Activated naive CD4-positive, alpha-beta T cell treated with anti-CD3 and anti-CD28 coated beads for 36 hours (primary cell): ENCODE measurements at regions of chrX and their contacts with region 1.

Region 1: DNA sequence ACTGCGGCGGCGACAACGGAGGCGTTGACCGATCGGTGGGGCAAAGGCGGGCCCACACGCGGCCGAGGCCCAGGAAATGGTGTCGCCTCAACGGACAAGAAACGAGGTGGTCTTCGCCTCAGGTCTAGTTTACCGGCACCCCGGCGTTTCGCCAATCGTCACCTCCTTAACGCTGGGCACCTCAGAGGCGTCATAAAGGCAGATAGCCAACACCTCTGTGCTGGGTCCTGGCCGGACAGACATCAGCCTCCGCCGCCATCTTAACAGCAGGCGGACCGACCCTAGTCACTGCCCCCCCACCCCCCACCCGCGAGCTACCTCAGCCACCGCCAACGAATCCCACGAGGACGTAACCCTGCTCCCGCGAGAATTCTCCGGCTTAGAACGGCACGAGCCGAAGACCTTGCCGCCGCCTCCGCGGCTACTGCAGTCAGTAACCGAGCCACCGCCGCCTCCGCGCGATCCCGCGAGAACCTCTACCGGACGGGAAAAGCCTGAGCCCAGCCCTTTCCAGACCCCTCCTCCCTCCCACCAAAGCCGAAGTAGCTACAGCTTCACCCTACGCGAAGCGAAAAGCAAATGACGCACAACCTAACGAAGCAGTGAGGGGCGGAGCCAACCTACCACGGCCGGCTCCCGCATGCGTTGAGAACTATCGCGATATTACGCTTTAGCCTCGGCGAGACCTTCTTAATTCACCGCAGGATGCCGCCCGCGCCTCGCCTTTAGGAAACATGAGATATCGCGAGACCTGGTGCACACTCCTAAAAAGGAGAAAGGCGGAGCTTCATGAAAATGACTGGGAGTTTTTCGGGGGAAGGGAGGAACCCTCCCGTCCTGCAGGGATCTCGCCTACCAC is 2.7 kb downstream of the HUWE1 start:
- DNase-seq: peak; percentile 96
- H3K4me3 Mint-ChIP-seq: peak overlapping the region; percentile 92
- H3K27ac Mint-ChIP-seq: peak overlapping the region; percentile 94
- H3K4me1 Mint-ChIP-seq: peaks cover 27% of the 10 kb centered on the region
- H3K27me3 Mint-ChIP-seq: no peaks in the 10 kb centered on the region

Region 2: GRCh38 chrX:53081925-53082772 is 601.6 kb before region 1 on chrX and contains the start of gene TSPYL2:
- CTCF ChIA-PET with region 1: no interaction called
- intact Hi-C with region 1: loop called (anchors 2 kb)
- DNase-seq: peak; percentile 93
- H3K4me3 Mint-ChIP-seq: peak within 1 kb of the TSS; percentile 90
- H3K27ac Mint-ChIP-seq: peak within 1 kb of the TSS; percentile 94
- H3K4me1 Mint-ChIP-seq: peaks cover 48% of the 10 kb centered on the region
- H3K27me3 Mint-ChIP-seq: no peaks in the 10 kb centered on the region
- total RNA-seq, gene TSPYL2: 72.2 to 74.4 TPM

Region 3: GRCh38 chrX:53422086-53422860 is 261.5 kb before region 1 on chrX and contains the start of gene SMC1A:
- CTCF ChIA-PET with region 1: no interaction called
- intact Hi-C with region 1: loop called (anchors 1 kb)
- DNase-seq: peak; percentile 97
- H3K4me3 Mint-ChIP-seq: peak within 1 kb of the TSS; percentile 88
- H3K27ac Mint-ChIP-seq: peak within 1 kb of the TSS; percentile 97
- H3K4me1 Mint-ChIP-seq: peaks cover 30% of the 10 kb centered on the region
- H3K27me3 Mint-ChIP-seq: no peaks in the 10 kb centered on the region
- total RNA-seq, gene SMC1A: 169 to 170 TPM

Region 4: DNA sequence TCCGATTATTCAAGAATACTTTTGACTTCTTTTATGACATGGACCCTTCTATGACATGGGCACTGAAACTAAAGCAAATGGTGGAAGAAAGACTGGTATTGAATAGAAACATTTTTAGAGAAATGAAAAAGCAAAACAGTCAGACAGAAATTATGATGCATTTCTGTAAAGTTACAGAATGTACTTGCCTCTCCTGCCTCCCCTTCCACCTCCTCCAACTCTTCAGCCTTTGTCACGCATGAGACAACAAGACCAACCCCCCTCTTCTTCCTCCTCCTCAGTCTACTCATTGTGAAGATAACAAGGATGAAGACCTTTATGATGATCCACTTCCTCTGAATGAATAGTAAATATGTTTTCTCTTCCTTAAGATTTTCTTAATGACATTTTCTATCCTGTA is 49.0 kb after region 1 on chrX:
- CTCF ChIA-PET with region 1: no interaction called
- intact Hi-C with region 1: loop called (anchors 1 kb)
- DNase-seq: peak; percentile 62
- H3K4me3 Mint-ChIP-seq: peak overlapping the region; percentile 32
- H3K27ac Mint-ChIP-seq: peak overlapping the region; percentile 99
- H3K4me1 Mint-ChIP-seq: peaks cover 55% of the 10 kb centered on the region
- H3K27me3 Mint-ChIP-seq: no peaks in the 10 kb centered on the region

Region 5: GRCh38 chrX:53831662-53832635 is 148.2 kb after region 1 on chrX:
- CTCF ChIA-PET with region 1: interaction called, 5 read pairs
- intact Hi-C with region 1: loop called (anchors 1 kb)
- DNase-seq: peak; percentile 70
- H3K4me3 Mint-ChIP-seq: peak overlapping the region; percentile 42
- H3K27ac Mint-ChIP-seq: peak overlapping the region; percentile 81
- H3K4me1 Mint-ChIP-seq: peaks cover 18% of the 10 kb centered on the region
- H3K27me3 Mint-ChIP-seq: no peaks in the 10 kb centered on the region

Region 6: GRCh38 chrX:54182864-54183608 is 499.3 kb after region 1 on chrX and contains the start of gene FAM120C:
- CTCF ChIA-PET with region 1: no interaction called
- intact Hi-C with region 1: loop called (anchors 1 kb)
- DNase-seq: peak; percentile 66
- H3K4me3 Mint-ChIP-seq: peak within 1 kb of the TSS; percentile 75
- H3K27ac Mint-ChIP-seq: peak within 1 kb of the TSS; percentile 84
- H3K4me1 Mint-ChIP-seq: peaks cover 38% of the 10 kb centered on the region
- H3K27me3 Mint-ChIP-seq: no peaks in the 10 kb centered on the region
- total RNA-seq, gene FAM120C: 4.3 to 5.9 TPM